Ovary (tissue), 10 donors: ENCODE measurements at regions of chr2 and their contacts with region 1.

Region 1: GRCh38 chr2:191501561-191502168 is 176.3 kb upstream of the NABP1 start:
- DNase-seq: no peak
- H3K4me3 ChIP-seq: no peak overlapping the region
- H3K27ac ChIP-seq: no peak overlapping the region
- H3K4me1 ChIP-seq: peaks cover 2% of the 10 kb centered on the region
- H3K27me3 ChIP-seq: no peaks in the 10 kb centered on the region
- CTCF ChIP-seq: peak; percentile 35 to 55 (median 37)
- EP300 ChIP-seq: no peak
- POLR2A ChIP-seq: no peak

Region 2: DNA sequence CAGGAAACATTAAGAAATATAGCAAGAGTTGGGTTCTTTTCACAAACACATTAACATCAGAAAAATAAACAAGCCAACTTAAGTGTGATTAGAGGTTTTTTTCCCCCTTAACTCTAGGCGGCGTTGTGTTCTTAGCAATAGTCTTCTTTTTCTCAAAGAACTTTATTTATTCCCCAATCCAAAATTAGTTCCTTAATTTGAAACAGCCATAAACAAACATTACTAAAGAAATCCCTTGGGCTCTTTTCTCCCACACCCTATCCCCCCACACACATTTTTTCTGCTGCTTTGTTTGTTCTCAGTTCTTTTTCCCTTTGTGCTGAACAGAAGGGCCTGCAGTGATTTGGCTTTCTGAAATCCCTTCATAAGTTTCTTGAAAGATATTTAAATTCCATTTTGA is 269.7 kb before region 1 on chr2:
- intact Hi-C with region 1: loop called in 2 of 4 experiments (anchors 2 to 5 kb)
- DNase-seq: no peak
- H3K4me3 ChIP-seq: no peak overlapping the region
- H3K27ac ChIP-seq: no peak overlapping the region
- H3K4me1 ChIP-seq: peaks cover 2% of the 10 kb centered on the region
- H3K27me3 ChIP-seq: no peaks in the 10 kb centered on the region
- CTCF ChIP-seq: peak; percentile 7 to 62 (median 40)
- EP300 ChIP-seq: no peak
- POLR2A ChIP-seq: no peak

Region 3: GRCh38 chr2:191245046-191245868 is 256.4 kb before region 1 on chr2 and contains the start of gene MYO1B:
- intact Hi-C with region 1: loop called in 2 of 4 experiments (anchors 5 to 10 kb)
- DNase-seq: peak; percentile 62 to 83 (median 75)
- H3K4me3 ChIP-seq: peak within 1 kb of the TSS; percentile 47
- H3K27ac ChIP-seq: peak within 1 kb of the TSS; percentile 17 to 59
- H3K4me1 ChIP-seq: peaks cover 10% of the 10 kb centered on the region
- H3K27me3 ChIP-seq: no peaks in the 10 kb centered on the region
- CTCF ChIP-seq: peak; percentile 17 to 60 (median 21)
- EP300 ChIP-seq: no peak
- POLR2A ChIP-seq: no peak
- total RNA-seq, gene MYO1B: 17.6 to 34.7 (median 27.3) TPM